GM13976 (cell line): ENCODE measurements at regions of chr3 and their contacts with region 1.

Region 1: DNA sequence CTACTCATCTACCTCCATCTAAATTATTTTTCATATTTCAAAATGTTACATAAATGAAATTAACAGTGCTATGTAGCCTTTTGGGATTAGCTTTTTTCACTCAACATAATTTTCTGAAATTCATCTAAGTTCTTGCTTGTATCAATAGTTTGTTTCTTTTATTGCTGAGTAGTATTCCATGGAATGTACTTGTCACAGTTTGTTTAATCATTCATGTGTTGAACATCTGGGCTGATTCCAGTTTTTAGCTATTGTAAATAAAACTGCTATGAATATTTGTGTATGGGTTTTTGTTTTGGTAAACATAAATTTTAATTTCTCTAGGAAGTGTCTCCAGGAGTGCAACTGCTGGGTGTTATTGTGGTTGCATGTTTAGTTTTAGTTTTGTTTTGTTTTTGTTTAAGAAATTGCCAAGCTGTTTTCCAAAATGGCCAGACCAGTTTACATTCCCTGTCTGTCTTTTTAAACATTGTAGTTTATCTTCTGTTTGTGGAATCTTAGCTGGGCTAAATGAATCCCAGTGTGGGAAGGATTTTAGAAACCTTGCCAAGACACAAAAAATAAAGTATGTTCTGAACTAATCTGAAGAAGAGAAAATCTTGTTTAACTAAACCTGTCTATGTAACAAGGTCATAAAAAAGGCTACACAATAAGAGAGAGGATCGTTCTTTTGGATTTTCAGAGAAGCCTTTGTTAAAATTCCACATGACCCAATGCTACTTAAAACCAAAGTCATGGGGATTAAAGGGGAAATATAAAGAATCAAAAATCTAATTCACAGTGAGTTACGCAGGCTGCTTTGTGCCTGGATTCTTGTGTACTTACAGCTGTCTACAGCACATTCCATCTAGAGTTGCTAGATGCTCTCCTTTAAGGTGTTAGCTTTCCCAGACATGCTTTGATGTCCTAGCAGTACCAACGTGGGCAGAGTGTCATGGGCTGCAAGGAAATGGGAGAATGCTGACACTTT is 129.2 kb upstream of the SUCLG2 start:
- DNase-seq: no peak
- CTCF ChIP-seq: no peak

Region 2: DNA sequence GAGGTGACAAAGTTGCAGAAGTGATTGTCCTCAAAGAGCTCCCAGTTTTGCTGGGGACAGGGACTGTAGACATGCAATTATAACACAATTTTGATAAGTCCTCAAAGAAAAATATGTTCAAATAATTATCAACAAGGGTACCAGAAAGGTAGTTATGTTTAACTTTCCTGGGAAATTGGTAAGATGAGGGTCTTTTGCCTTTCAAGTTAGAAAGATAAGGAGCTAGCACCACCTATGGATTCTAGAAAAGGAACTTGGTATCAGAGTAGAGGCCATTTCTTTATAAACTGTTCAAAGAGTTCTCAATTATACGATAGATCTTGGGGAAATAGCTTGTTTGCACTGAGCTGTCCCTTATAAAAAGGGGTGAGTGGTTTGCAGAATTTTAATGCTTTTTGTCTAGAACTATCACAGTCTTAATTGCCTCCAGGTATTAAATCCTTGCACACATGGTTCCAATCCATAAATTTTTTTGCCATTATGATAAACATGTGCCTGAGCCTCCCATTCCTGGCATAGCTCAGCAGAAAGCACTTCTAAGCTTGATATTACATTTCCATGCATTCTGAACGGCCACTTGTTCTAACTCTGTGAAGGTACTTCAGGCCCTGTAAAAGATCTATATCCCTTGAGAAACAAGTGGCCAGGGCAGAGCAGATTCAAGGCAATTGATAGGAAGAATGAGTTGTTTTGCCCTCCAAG is 1035.2 kb before region 1 on chr3:
- in situ Hi-C with region 1: no loop called
- DNase-seq: no peak
- CTCF ChIP-seq: no peak

Region 3: DNA sequence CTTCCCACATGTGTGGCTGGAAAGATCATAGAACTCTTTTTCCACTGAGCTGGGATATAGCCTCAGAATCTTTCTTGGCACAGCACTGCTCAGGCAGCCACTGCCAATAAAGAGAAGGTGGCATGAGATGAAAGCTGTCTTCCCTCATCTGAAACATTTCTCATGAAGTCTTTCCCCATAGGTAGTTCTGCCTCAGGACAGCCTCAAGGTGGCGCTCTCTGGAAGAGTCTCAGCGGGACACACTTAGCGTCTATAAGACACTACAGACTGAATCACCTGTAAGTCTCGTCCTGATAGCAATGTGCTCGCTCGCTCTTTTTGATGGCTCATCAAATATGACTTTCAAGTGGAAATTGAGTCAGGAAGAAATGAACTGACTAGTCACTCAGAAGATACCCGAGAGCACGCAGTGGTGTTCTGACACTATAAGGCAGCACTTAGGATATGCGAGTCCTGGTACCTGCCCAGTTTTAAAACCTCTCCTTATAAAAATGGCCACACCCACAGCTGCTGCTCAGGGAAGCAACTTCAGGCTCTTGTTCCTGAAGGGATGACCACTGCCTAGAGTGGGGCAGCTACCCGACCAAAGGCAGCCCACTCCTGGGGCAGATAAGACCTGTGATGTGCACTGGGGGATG is 398.7 kb before region 1 on chr3:
- in situ Hi-C with region 1: loop called (anchors 10 kb)
- DNase-seq: peak; percentile 52
- CTCF ChIP-seq: peak; percentile 56